ENCODE measurements at regions of chr12 and their contacts with region 1.

Region 1: GRCh38 chr12:13211859-13212664 is 15.5 kb downstream of the EMP1 start:
- DNase-seq: no peak
- H3K4me3 ChIP-seq: no peak overlapping the region
- H3K27ac ChIP-seq: peak overlapping the region; percentile 92
- H3K4me1 ChIP-seq: peaks cover 50% of the 10 kb centered on the region
- H3K27me3 ChIP-seq: no peaks in the 10 kb centered on the region
- CTCF ChIP-seq: peak; percentile 68 to 71

Region 2: GRCh38 chr12:12786716-12787601 is 425.1 kb before region 1 on chr12:
- CTCF ChIA-PET with region 1: no interaction called
- dilution Hi-C with region 1: no loop called
- in situ Hi-C with region 1: no loop called
- intact Hi-C with region 1: loop called (anchors 2 kb)
- DNase-seq: peak; percentile 74
- H3K4me3 ChIP-seq: peak overlapping the region; percentile 51 to 62 (median 58)
- H3K27ac ChIP-seq: peak overlapping the region; percentile 40
- H3K4me1 ChIP-seq: peaks cover 27% of the 10 kb centered on the region
- H3K27me3 ChIP-seq: no peaks in the 10 kb centered on the region
- CTCF ChIP-seq: no peak

Region 3: DNA sequence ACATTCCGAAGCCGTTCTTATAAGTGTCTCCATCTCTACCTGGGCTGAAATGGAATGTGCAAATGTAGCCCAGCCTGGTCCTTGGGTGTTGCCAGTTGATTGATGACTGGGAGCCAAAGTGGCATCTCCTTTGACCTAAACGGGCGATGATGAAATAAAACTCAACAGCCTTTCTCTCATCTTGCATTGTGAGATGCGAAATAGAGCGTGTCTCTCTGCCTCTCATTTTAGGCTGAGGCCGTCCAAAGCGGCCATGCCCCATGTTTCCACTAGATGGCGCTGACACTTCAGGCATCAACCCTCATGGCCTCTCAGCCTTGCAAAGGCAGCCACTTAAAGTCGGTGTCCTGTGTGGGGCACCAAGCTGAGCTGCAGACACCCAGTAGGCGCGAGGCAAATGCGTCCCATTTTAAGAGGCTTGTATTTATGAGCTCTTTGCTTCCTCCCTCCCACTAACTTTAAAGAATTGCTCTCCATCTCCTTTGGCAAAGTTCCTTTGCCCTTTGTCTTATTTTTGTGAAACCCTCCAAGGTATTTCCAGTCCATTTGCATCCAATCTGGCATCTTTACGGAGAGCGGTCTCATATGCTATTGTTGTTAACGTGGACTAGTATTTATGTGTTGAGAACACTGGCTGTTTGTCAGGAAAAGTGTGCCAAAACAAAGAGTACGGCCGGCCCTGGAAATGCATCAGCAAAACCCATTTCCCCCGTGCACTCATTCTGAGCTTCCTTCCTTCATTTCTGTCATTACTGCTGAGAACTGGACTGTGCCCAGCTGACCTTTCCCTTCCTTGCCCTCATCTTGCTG is 295.7 kb before region 1 on chr12:
- CTCF ChIA-PET with region 1: interaction called, 3 read pairs
- dilution Hi-C with region 1: no loop called
- in situ Hi-C with region 1: no loop called
- intact Hi-C with region 1: loop called (anchors 1 kb)
- DNase-seq: peak; percentile 54
- H3K4me3 ChIP-seq: no peak overlapping the region
- H3K27ac ChIP-seq: no peak overlapping the region
- H3K4me1 ChIP-seq: no peaks in the 10 kb centered on the region
- H3K27me3 ChIP-seq: no peaks in the 10 kb centered on the region
- CTCF ChIP-seq: peak; percentile 97 to 99

Region 4: GRCh38 chr12:12999959-13000615 is 212.0 kb before region 1 on chr12 and contains the start of gene HEBP1:
- CTCF ChIA-PET with region 1: no interaction called
- dilution Hi-C with region 1: loop called (anchors 25 kb)
- in situ Hi-C with region 1: loop called (anchors 10 kb)
- intact Hi-C with region 1: loop called (anchors 1 kb)
- DNase-seq: peak; percentile 86
- H3K4me3 ChIP-seq: peak within 1 kb of the TSS; percentile 81 to 94 (median 82)
- H3K27ac ChIP-seq: peak within 1 kb of the TSS; percentile 72
- H3K4me1 ChIP-seq: peaks cover 19% of the 10 kb centered on the region
- H3K27me3 ChIP-seq: no peaks in the 10 kb centered on the region
- CTCF ChIP-seq: no peak
- total RNA-seq, gene HEBP1: 13.5 to 36.5 TPM

Region 5: GRCh38 chr12:13044002-13044905 is 167.8 kb before region 1 on chr12 and contains the start of gene FAM234B:
- CTCF ChIA-PET with region 1: interaction called, 4 read pairs
- dilution Hi-C with region 1: no loop called
- in situ Hi-C with region 1: no loop called
- intact Hi-C with region 1: loop called (anchors 1 kb)
- DNase-seq: peak; percentile 62
- H3K4me3 ChIP-seq: peak within 1 kb of the TSS; percentile 76 to 97 (median 95)
- H3K27ac ChIP-seq: no peak within 1 kb of the TSS
- H3K4me1 ChIP-seq: peaks cover 3% of the 10 kb centered on the region
- H3K27me3 ChIP-seq: no peaks in the 10 kb centered on the region
- CTCF ChIP-seq: no peak
- total RNA-seq, gene FAM234B: 8.3 to 9.5 TPM

Region 6: GRCh38 chr12:13100882-13101769 is 110.9 kb before region 1 on chr12:
- CTCF ChIA-PET with region 1: interaction called, 22 read pairs
- dilution Hi-C with region 1: no loop called
- in situ Hi-C with region 1: loop called in 1 of 2 experiments (anchors 5 kb)
- intact Hi-C with region 1: loop called (anchors 1 kb)
- DNase-seq: peak; percentile 89
- H3K4me3 ChIP-seq: peak overlapping the region; percentile 28 to 47 (median 32)
- H3K27ac ChIP-seq: peak overlapping the region; percentile 100
- H3K4me1 ChIP-seq: peaks cover 54% of the 10 kb centered on the region
- H3K27me3 ChIP-seq: no peaks in the 10 kb centered on the region
- CTCF ChIP-seq: no peak

Region 7: DNA sequence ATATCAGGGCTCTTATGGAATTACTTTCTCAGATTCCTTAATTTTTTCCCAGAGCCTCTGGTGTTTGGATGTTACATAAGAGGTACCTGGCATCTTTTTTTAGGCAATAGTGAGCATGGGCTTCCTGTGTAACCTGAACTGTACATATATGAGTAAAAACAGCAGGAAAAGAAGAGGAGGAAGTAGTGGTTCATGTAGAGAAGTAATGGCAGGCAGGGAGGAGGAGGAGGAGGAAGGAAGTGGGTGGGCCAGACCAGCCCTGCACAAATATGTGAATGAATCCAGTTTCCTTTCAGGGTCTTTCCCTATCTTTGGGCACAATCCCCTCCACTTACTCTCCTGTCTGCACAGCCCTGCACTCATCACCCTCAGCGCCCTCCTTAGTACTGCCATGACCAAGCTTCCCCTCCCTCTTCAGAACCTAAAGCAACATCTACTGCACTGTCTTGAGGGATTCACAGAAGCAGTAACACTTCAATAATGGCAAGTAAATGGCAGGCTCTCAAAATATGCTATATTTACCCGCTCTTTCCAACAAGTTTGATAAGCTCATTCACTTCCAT is 67.7 kb before region 1 on chr12:
- CTCF ChIA-PET with region 1: no interaction called
- dilution Hi-C with region 1: loop called (anchors 5 kb)
- in situ Hi-C with region 1: no loop called
- intact Hi-C with region 1: no loop called
- DNase-seq: no peak
- H3K4me3 ChIP-seq: no peak overlapping the region
- H3K27ac ChIP-seq: no peak overlapping the region
- H3K4me1 ChIP-seq: peaks cover 3% of the 10 kb centered on the region
- H3K27me3 ChIP-seq: no peaks in the 10 kb centered on the region
- CTCF ChIP-seq: no peak

Region 8: GRCh38 chr12:13304924-13305323 is 92.9 kb after region 1 on chr12:
- CTCF ChIA-PET with region 1: no interaction called
- dilution Hi-C with region 1: no loop called
- in situ Hi-C with region 1: no loop called
- intact Hi-C with region 1: no loop called
- DNase-seq: no peak
- H3K4me3 ChIP-seq: no peak overlapping the region
- H3K27ac ChIP-seq: no peak overlapping the region
- H3K4me1 ChIP-seq: no peaks in the 10 kb centered on the region
- H3K27me3 ChIP-seq: no peaks in the 10 kb centered on the region
- CTCF ChIP-seq: no peak

Region 9: GRCh38 chr12:13326076-13326475 is 114.0 kb after region 1 on chr12:
- CTCF ChIA-PET with region 1: no interaction called
- dilution Hi-C with region 1: no loop called
- in situ Hi-C with region 1: no loop called
- intact Hi-C with region 1: no loop called
- DNase-seq: no peak
- H3K4me3 ChIP-seq: no peak overlapping the region
- H3K27ac ChIP-seq: no peak overlapping the region
- H3K4me1 ChIP-seq: no peaks in the 10 kb centered on the region
- H3K27me3 ChIP-seq: no peaks in the 10 kb centered on the region
- CTCF ChIP-seq: no peak